Activated CD4-positive, alpha-beta T cell treated with anti-CD3 and anti-CD28 coated beads for 36 hours (primary cell): ENCODE measurements at regions of chr1 and their contacts with region 1.

Region 1: DNA sequence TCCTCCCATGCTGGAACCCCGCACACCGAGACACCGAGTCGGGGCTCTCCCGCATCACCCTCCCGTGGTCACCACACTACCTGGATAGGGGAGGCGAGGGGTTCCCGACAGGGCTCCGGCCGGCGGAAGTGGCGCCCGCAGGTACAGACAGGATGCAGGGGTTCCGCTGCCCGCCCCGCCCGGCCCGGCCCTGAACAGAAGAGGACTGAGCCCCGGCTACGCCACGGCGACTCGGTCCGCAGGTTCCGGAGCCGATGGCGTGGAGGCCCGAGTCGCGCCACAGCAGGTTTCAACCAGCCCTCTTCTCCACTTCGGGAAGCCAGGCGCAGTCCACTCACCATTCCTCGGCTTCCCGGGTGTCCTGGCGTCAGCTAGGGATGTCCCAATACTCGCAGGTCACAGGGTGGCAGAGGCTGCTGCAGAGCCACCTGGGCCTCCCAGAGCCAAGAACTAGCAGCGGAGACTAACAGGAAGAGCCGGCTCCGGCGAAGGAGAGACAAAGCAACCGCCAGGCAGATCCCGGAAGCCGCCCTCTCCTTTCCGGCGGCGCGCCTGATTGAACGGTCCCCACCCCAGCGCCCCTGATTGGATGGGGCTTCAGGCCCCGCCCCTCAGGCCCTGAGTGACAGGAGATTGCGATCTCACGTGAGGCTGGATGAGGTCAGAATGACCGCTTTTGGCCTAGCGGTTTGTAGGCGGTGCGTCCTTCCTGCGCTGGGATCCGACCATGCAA is at the start of gene ZNF669:
- DNase-seq: peak; percentile 97
- ATAC-seq: peak; percentile 100
- H3K4me3 Mint-ChIP-seq: peak within 1 kb of the TSS; percentile 86
- H3K27ac Mint-ChIP-seq: peak within 1 kb of the TSS; percentile 90
- H3K4me1 Mint-ChIP-seq: peaks cover 19% of the 10 kb centered on the region
- H3K27me3 Mint-ChIP-seq: peaks cover 16% of the 10 kb centered on the region
- total RNA-seq, gene ZNF669: 6.9 to 8.8 TPM

Region 2: DNA sequence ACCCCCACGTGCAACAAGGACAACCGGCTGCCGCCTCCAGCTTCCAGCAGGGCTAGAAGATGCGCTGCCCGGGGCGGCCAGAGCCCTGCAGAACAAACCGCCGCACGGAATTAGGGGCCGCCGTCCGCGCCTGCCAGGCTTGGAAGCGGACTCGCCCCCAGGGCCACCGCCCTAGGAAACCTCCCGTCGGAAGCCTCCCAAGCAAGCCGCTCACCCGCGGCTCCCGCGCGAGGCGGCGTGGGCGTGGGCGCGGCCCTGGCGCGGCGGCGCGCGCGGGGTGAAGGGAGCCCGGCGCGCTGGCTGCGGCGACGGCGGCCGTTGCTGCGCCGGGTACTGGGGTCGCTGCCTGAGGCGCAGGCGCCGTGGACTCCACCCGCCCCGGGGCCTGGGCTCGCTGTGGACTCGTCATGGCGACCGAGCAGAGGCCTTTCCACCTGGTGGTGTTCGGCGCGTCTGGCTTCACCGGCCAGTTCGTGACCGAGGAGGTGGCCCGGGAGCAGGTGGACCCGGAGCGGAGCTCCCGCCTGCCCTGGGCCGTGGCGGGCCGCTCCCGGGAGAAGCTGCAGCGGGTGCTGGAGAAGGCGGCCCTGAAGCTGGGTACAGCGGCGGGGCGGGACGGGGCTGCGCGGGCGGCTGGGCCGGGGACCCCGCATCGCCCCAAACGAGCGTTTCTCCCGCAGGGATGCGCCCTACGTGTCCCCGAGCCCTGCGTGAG is 379.9 kb before region 1 on chr1 and contains the start of gene SCCPDH:
- CTCF ChIA-PET with region 1: no interaction called
- POLR2A ChIA-PET with region 1: no interaction called
- intact Hi-C with region 1: loop called in 1 of 2 experiments (anchors 5 kb)
- DNase-seq: peak; percentile 84
- ATAC-seq: peak; percentile 96
- H3K4me3 Mint-ChIP-seq: peak within 1 kb of the TSS; percentile 83
- H3K27ac Mint-ChIP-seq: peak within 1 kb of the TSS; percentile 84
- H3K4me1 Mint-ChIP-seq: peaks cover 8% of the 10 kb centered on the region
- H3K27me3 Mint-ChIP-seq: no peaks in the 10 kb centered on the region
- total RNA-seq, gene SCCPDH: 17.1 to 28.6 TPM

Region 3: GRCh38 chr1:247078261-247079140 is 25.5 kb before region 1 on chr1 and contains the start of gene ZNF670:
- CTCF ChIA-PET with region 1: interaction called, 4 read pairs
- POLR2A ChIA-PET with region 1: no interaction called
- intact Hi-C with region 1: loop called (anchors 1 kb)
- DNase-seq: peak; percentile 97
- ATAC-seq: peak; percentile 100
- H3K4me3 Mint-ChIP-seq: peak within 1 kb of the TSS; percentile 89
- H3K27ac Mint-ChIP-seq: peak within 1 kb of the TSS; percentile 91
- H3K4me1 Mint-ChIP-seq: peaks cover 27% of the 10 kb centered on the region
- H3K27me3 Mint-ChIP-seq: peaks cover 5% of the 10 kb centered on the region
- total RNA-seq, gene ZNF670: 4.3 to 4.9 TPM